ENCODE measurements at regions of chr9 and their contacts with region 1.

Region 1: GRCh38 chr9:122810306-122810946 is 10.5 kb downstream of the OR1K1 start:
- DNase-seq: peak; percentile 89
- H3K27ac ChIP-seq: no peak overlapping the region
- CTCF ChIP-seq: peak; percentile 89

Region 2: GRCh38 chr9:122464633-122465567 is 345.5 kb before region 1 on chr9:
- CTCF ChIA-PET with region 1: interaction called, 21 read pairs
- POLR2A ChIA-PET with region 1: no interaction called
- DNase-seq: peak; percentile 90
- H3K27ac ChIP-seq: no peak overlapping the region
- CTCF ChIP-seq: peak; percentile 98

Region 3: DNA sequence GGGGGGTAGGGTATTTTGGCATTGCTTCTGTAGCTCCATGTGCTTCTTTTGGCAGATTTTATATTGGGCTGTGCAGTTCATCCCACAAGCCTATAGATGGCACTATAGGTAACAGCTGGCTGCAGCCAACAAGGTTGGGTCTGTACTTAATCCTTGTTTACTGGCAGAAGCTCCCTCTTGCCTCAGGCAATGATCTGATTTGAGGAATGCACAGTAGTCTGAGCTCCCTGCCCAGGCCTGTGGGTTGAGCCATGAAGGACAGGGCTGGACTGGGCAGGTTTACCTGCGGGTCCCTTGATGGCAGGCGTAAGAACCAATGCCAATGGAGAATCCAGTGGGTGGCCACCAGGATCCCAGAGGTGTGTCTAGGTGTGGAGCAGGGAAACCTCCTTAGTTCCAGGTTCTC is 311.5 kb before region 1 on chr9:
- CTCF ChIA-PET with region 1: interaction called, 16 read pairs
- POLR2A ChIA-PET with region 1: no interaction called
- DNase-seq: peak; percentile 79
- H3K27ac ChIP-seq: no peak overlapping the region
- CTCF ChIP-seq: peak; percentile 93

Region 4: DNA sequence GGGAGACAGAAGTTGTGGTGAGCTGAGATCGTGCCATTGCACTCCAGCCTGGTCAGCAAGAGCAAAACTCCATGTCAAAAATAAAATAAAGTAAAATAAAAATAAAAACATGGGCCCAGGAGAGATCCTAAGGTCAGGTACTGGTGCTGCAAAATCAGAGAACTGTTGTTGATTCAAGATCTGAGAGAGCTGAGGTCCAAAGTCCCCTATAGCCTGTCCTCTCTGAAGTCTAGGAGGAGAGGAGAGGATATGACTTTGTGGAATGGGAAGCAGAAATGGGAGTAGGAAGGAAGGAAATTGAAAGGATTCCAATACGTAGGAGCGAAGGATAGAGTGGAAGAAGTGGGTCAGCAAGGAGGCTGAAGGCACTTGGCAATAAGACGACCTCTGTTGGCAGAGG is 91.2 kb before region 1 on chr9:
- CTCF ChIA-PET with region 1: no interaction called
- POLR2A ChIA-PET with region 1: no interaction called
- DNase-seq: no peak
- H3K27ac ChIP-seq: no peak overlapping the region
- CTCF ChIP-seq: no peak

Region 5: DNA sequence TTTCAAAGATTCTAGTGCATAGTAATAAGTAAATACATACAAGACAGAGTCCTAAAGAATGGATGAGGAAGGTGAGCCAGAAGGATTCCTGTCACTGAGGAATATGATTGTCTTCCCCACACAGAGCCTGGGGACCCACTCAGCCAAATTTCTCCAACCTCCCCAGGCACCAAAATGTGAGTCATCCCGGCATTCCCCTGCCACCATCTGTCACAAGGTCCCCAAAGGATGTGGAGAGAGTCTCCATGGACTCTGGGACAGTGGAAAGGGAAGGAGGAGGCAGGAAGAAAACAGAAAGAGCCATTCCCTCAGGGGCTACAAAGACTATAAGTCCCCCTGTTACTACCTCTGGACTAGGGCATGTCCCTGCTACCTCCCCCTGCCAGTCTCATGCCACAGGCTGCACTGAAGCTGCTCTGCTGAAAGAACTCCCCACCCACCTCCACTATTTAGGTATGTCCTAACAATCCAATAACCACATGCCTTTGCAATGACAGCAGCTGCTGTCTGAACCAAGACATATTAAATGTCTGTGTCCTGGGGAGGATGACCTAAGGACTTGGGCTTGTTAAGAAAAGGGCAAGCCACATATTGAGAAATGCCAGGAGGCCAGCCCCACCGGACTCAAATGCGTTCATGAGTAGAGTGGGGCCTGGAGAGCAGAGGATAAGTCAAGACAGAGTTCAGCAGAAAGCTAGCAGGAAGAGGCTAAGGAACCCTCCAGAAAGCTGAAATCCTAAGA is 32.3 kb before region 1 on chr9:
- CTCF ChIA-PET with region 1: no interaction called
- POLR2A ChIA-PET with region 1: no interaction called
- DNase-seq: peak; percentile 63
- H3K27ac ChIP-seq: no peak overlapping the region
- CTCF ChIP-seq: no peak

Region 6: DNA sequence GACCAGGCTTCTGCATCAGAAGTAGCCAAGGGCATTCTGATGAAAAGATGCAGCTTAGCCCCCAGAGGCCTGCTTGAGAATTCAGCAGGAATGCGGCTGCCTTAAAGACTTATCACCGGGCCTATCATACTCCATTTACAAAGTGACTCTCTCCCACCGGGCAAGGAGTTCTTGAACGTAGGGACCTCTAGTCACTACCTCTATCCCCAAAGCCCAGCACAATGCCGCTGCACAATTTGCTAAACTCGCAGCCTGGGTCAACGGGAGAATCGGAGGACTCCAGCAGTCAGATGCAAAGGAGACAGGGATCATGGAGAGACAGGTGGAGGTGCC is 17.3 kb after region 1 on chr9:
- CTCF ChIA-PET with region 1: no interaction called
- POLR2A ChIA-PET with region 1: no interaction called
- DNase-seq: peak; percentile 37
- H3K27ac ChIP-seq: peak overlapping the region; percentile 96
- CTCF ChIP-seq: no peak

Region 7: GRCh38 chr9:122860317-122861142 is 50.1 kb after region 1 on chr9:
- CTCF ChIA-PET with region 1: no interaction called
- POLR2A ChIA-PET with region 1: no interaction called
- DNase-seq: no peak
- H3K27ac ChIP-seq: no peak overlapping the region
- CTCF ChIP-seq: no peak

Measured in RWPE1 (cell line).